Right ventricle myocardium inferior (tissue), 1 donor: ENCODE measurements at regions of chr2 and their contacts with region 1.

Region 1: GRCh38 chr2:234951664-234952269 is at the start of gene SH3BP4:
- DNase-seq: peak; percentile 90
- ATAC-seq: peak; percentile 93
- total RNA-seq, gene SH3BP4: 9.3 TPM

Region 2: GRCh38 chr2:234241656-234242458 is 709.9 kb before region 1 on chr2:
- intact Hi-C with region 1: no loop called
- DNase-seq: no peak
- ATAC-seq: no peak

Region 3: GRCh38 chr2:234620018-234620417 is 331.7 kb before region 1 on chr2:
- intact Hi-C with region 1: no loop called
- DNase-seq: no peak
- ATAC-seq: no peak

Region 4: DNA sequence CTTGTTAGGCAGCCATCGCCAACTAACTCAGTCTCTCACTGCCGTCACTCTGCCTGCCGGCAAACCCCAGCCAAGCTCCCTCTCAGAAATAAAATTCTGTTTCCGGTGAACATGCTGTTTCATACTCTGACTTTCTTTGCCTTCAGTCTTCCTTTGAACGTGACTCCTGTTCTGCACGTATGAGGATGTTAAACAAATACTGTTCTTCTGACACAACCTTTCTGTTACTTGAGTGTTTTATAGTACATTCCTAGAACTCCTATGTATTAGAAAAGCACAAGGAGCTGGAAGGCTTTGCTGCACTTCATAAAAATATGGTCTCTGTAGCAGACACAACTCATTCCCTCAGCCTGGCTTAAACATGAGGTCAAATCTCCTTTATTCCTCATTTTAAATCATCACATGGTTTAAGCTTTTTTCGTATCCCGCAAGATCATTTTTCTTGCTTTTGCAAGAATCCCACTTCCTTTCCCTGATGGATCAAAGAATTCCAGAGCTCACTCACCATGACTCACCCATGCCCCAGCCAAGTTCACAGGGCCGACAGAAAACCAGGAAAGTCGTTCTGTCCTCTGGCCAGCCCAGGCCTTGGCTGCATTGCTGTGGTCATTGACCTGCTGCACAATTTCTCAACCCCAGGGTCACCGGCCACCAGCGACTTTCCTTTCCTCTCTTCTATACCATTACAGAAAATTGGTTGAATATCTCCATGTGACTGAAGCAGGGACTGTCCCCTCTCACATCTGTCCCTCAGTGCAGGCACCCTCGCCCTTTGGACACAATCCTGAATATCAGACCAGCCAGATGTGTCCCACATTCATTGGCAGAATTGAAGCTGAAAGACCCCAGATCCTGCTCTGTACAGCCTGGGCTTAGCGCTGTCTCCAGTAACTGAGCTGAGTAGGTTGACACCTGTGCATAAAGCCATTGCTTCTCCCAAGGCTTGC is 271.8 kb before region 1 on chr2:
- intact Hi-C with region 1: loop called (anchors 5 kb)
- DNase-seq: no peak
- ATAC-seq: peak; percentile 75

Region 5: GRCh38 chr2:234840336-234840735 is 111.4 kb before region 1 on chr2:
- intact Hi-C with region 1: no loop called
- DNase-seq: no peak
- ATAC-seq: peak; percentile 54

Region 6: GRCh38 chr2:234881413-234882241 is 70.1 kb before region 1 on chr2:
- intact Hi-C with region 1: loop called (anchors 5 kb)
- DNase-seq: peak; percentile 79
- ATAC-seq: peak; percentile 94

Region 7: DNA sequence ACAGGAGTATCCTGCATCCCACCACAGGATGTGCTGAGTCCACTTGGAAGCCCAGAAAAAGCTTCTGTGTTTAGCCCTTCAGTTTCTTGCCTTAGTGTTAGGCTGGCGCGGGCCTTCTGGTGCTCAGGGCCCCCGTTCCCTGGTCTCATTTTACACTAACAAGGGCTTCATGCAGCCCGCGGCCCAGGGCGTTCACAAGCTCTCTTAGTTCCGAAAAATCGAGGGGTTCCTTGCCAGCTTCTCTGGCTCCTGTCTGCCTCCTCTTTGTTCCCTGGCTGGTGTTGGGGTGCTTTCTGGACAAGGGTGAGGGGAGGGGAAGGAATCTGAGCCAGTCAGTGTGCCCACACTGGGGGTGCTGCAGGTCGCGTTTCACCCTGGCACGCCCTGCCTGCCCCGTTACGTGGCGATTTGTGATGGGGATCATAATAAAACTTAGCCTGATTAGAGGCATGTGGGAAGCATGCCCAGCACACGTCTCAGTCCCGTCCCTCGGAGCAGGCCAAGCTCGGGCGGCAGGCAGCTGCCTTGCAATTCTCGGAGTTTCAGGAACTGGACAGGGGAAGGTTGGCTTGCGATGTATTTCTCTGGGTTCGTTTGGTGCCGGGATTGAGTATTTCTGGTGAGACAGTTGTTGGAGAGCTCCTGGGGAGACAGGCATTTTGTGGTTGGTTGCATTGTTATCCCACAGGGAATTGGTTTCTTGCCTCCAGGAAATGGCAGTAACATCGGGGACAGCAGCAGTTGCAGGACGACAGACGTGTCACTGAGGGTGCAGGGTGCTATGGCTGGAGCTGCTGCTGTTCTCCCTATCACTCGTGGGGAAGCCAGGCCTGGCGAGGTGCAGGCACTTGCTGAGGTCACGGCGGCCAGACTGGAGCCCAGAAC is 23.0 kb after region 1 on chr2:
- intact Hi-C with region 1: loop called (anchors 1 kb)
- DNase-seq: no peak
- ATAC-seq: peak; percentile 47

Region 8: GRCh38 chr2:234981197-234982117 is 29.7 kb after region 1 on chr2:
- intact Hi-C with region 1: loop called (anchors 2 kb)
- DNase-seq: no peak
- ATAC-seq: peak; percentile 82

Region 9: GRCh38 chr2:235034265-235035118 is 82.7 kb after region 1 on chr2:
- intact Hi-C with region 1: no loop called
- DNase-seq: peak; percentile 58
- ATAC-seq: no peak

Region 10: DNA sequence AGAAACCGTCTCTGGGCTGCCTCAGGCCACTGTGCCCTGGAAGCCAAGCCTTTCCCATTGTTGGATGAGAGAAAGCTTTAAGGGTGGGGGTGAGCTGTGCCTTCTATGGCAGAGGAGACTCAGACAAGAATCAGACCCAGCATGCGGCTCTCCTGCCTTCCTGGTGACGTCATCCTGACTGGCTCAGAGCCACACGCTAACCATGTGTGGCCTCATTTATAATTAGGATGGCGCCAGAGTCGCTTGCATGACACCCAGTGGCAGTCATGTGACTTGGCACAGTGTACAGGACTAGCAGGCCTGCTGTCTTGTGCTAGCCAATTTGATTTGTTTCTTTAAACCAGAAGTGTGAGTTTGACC is 99.2 kb after region 1 on chr2:
- intact Hi-C with region 1: loop called (anchors 2 kb)
- DNase-seq: peak; percentile 92
- ATAC-seq: peak; percentile 90

Region 11: DNA sequence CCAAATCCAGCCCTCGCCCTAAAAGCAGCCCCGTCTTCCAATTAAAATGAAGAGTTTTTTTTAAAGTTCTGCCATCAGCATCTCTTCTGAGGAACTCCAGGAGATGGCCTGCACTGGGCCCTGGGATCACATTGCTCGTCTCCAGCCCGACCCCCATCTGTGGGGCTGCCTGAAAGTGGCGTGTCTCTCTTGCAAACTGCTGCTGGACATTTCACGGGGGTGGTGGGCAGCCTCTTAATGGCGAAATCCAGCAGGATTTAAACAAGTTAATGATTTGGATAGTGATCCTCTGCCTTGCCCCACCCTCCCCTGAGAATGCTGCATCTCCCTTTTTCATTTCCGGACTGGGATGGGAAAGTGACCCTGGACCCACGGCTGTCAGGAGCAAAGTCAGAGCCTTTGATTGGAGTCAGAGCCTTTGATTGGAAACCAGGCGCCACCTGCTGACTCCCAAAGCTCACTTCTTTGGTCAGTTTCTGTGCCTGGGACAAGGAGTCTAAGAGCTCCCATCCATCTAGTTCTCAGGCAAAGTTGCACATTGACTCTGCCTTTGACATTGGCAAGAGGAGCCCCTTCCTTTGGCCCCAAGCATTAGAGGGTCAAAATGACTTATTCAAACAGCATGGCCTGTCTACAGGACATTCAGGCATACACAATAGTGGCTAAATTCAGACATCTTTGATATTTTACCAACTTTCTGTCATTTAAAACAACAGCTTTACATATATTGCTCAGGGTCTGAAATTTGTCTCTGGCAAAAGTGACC is 155.3 kb after region 1 on chr2:
- intact Hi-C with region 1: loop called (anchors 1 kb)
- DNase-seq: no peak
- ATAC-seq: peak; percentile 65